Left ventricle myocardium inferior (tissue), 1 donor: ENCODE measurements at regions of chr20 and their contacts with region 1.

Region 1: GRCh38 chr20:17504898-17505635 is 26.1 kb downstream of the BFSP1 start:
- DNase-seq: peak; percentile 64
- H3K4me3 ChIP-seq: peak overlapping the region; percentile 69
- H3K27ac ChIP-seq: peak overlapping the region; percentile 64
- H3K4me1 ChIP-seq: peaks cover 15% of the 10 kb centered on the region
- H3K27me3 ChIP-seq: peaks cover 9% of the 10 kb centered on the region
- CTCF ChIP-seq: peak; percentile 86

Region 2: DNA sequence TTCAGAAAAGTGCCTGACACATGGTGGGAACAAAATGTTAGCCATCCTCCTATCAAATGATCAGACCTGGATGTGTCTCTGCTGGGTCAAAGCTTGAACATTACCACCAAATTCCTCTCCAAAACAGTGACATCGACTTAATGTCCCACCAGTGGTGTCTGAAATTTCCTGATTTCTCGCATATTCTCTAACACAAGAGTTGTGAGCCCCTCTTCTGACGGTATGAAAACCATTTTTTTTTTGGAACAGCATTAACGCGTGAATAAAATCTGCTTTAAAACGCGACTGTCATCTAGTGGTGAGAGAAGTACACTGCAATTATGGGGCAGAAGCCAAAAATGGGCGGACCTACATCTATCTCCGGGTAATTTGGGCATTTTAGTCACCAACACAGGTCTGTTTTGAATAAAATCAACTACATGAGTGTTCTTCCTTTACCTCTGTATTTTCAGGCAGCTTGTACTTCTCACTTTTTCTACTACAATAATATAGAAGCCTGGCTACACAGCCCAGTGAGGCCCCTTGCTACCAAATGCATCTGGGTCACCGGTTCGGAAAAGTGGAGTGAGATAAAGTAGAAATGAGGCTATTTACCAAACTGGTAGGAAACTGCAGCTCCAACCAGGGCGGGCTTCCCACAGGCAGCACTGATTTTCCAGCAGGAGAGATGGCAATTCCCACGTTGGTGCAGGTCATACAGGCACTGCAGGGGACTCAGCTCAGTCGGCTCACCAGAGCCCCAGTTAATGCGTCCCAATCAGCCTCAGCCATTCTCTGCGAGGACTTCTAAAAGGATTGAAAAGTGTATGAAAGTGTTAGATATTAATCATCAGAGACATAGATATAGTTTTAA is 491.1 kb after region 1 on chr20:
- intact Hi-C with region 1: loop called (anchors 10 kb)
- DNase-seq: no peak
- H3K4me3 ChIP-seq: no peak overlapping the region
- H3K27ac ChIP-seq: no peak overlapping the region
- H3K4me1 ChIP-seq: peaks cover 4% of the 10 kb centered on the region
- H3K27me3 ChIP-seq: peaks cover 9% of the 10 kb centered on the region
- CTCF ChIP-seq: peak; percentile 98